HEK293 (cell line): ENCODE measurements at regions of chr10 and their contacts with region 1.

Region 1: DNA sequence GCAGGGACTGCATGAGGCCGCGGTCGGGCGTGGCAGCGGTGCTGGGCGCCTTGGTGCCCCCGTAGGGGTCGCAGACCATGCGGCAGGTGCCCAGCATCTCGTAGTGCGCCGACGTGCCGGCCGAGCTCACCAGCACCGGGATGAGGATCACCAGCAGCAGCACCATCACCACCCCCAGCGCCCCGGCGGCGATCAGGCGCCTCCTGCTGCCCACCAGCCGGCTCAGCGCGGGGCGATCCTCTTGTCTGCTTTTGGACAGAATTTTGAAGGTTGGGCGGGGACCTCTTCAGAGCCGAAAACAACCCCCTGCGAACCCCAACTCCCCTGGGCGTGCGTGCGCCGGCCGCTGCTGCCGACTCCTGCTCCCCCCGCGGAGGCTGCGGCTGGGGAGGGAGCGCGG is 779 bp downstream of the C1QL3 start:
- H3K4me3 ChIP-seq: peak overlapping the region; percentile 36
- H3K27ac ChIP-seq: no peak overlapping the region
- H3K4me1 ChIP-seq: no peaks in the 10 kb centered on the region
- CTCF ChIP-seq: peak; percentile 62

Region 2: GRCh38 chr10:15901889-15902288 is 619.0 kb before region 1 on chr10:
- CTCF ChIA-PET with region 1: interaction called, 20 read pairs
- POLR2A ChIA-PET with region 1: no interaction called
- H3K4me3 ChIP-seq: no peak overlapping the region
- H3K27ac ChIP-seq: no peak overlapping the region
- H3K4me1 ChIP-seq: no peaks in the 10 kb centered on the region
- CTCF ChIP-seq: no peak

Region 3: DNA sequence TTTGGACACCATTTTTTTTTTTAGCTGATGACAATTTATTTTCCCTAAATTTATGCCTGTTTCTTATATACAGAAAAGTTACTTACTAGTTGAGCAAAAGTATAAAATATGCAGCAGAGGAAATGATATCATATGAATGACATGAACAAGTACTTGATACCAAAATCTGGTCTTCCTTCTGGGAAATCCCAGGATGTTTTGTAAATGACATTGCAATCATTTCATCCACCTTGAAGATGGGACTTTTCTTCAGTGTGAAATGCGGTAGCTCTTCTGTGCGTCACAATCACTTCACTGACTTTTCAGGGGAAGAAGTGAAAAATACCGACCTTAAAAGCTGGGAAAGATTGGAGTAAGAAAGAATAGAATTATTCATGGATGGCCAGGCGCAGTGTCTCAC is 23.0 kb before region 1 on chr10:
- CTCF ChIA-PET with region 1: no interaction called
- POLR2A ChIA-PET with region 1: no interaction called
- H3K4me3 ChIP-seq: no peak overlapping the region
- H3K27ac ChIP-seq: no peak overlapping the region
- H3K4me1 ChIP-seq: no peaks in the 10 kb centered on the region
- CTCF ChIP-seq: no peak

Region 4: DNA sequence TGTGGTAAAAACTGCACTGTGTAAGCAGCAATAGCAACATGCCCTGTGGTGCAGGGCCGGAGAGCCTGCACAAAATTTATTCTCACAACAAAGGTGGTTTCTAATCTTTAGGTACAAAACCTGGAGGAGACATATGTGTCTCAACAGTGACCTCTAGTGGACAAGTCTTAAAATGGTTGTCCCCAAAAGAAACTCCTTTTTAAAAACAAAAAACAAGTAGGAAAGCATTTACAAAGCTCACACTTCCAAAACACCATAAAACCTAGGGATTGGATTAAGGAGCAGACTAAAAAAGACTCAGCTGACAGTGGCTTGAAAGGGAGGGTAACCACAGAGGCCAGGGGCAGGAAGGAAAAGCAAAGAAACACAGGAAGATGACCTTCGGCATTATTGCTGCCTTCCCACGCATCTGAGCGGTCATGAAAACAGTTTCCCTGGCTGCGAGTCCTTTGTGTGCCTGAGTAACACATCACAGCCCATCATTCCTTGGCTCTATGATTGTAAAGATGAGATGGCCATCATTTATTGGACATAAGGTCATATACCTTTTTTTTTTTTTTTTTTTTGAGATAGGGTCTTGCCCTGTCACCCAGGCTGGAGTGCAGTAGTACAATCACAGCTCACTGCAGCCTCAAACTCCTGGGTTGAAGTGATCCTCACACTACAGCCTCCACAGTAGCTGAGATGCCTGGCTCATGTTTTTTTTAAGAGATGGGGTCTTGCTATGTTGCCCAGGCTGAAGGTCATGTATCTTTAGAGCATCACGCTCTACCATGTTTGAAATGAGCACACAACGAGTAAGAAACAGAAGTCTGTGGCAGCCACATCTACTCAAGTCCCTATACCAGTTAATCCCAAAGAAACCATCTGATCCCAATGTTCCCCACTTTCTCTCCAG is 256.8 kb after region 1 on chr10:
- CTCF ChIA-PET with region 1: no interaction called
- POLR2A ChIA-PET with region 1: no interaction called
- H3K4me3 ChIP-seq: no peak overlapping the region
- H3K27ac ChIP-seq: no peak overlapping the region
- H3K4me1 ChIP-seq: no peaks in the 10 kb centered on the region
- CTCF ChIP-seq: 0 out of 2 replicates have a peak, but pooled peaks have one; percentile 29